ENCODE measurements at regions of chr12 and their contacts with region 1.

Region 1: DNA sequence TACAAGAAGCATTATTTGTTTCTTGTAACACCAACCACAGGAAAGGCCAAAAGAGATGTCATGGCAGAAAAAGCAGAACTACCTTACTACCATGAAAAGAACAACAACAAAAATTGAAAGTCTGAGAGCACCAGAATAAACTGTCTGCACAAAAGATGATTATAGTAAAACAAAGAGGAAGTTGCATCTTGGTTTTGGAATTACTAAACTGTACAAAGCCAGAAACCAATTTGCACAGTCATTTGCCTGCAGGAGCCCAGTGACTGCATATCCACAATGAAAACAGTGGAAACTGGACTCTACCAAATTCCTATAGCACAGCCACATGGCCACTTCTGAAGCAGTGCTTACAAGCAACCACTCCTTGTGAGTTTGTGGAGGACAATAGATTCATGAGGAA is 276.2 kb downstream of the SSPN start:
- DNase-seq: peak; percentile 69
- ATAC-seq: peak; percentile 70
- H3K4me3 ChIP-seq: peak overlapping the region in 1 of 5 experiments; percentile 8
- H3K4me3 Mint-ChIP-seq: peak overlapping the region; percentile 36
- H3K27ac ChIP-seq: peak overlapping the region; percentile 39 to 63
- H3K27ac Mint-ChIP-seq: peak overlapping the region; percentile 78
- H3K4me1 ChIP-seq: peaks cover 30 to 38% of the 10 kb centered on the region in 2 donors
- H3K4me1 Mint-ChIP-seq: peaks cover 47% of the 10 kb centered on the region
- H3K27me3 ChIP-seq: no peaks in the 10 kb centered on the region
- H3K27me3 Mint-ChIP-seq: no peaks in the 10 kb centered on the region
- CTCF ChIP-seq: no peak

Region 2: DNA sequence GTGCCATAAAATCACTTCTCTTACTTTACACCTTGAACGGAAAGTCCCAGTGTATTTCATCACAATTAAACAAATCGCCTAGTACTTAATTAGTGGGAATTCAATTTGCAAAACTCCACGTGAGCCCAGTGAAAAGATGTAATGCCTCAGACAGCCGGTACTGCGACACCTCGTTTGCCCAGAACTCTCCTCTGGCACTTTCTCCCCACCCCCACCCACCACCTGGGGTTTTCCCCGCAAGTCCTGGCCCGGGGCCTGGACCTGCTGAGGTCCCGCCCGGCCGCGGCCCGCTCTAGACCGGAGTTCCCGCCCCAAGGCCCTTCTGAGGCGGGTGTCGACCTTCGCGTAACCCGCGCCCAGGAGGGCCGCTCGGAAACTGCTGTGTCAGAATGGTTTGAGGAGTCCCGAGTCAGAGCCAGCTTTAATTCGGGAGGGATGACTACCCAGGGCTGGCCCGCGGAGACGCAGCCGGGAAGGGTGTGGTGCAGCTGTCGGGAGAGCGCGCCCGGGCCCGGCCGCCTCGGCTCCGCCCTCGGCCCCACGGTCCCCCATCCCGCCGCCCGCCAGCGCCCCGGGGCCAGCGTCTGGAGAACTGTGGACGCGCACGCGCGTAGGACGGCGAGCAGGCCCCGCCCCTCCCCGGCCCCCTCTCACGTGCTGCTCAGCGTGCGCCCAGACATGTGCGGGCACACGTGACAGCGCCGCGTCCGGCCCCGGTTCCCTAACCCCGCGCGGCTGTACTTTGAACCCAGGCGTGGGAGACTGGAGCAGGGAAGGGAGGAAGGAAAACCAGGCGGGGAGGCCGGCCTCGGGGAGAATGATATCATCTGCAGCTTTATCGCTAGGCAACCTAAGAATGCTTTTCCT is 357.5 kb before region 1 on chr12:
- CTCF ChIA-PET with region 1: interaction called, 6 read pairs
- POLR2A ChIA-PET with region 1: no interaction called
- intact Hi-C with region 1: loop called (anchors 2 kb)
- DNase-seq: peak; percentile 94
- ATAC-seq: peak; percentile 80
- H3K4me3 ChIP-seq: peak overlapping the region in 4 of 5 experiments; percentile 67 to 80 (median 70)
- H3K4me3 Mint-ChIP-seq: peak overlapping the region; percentile 87
- H3K27ac ChIP-seq: peak overlapping the region; percentile 91 to 95
- H3K27ac Mint-ChIP-seq: peak overlapping the region; percentile 75
- H3K4me1 ChIP-seq: peaks cover 36 to 47% of the 10 kb centered on the region in 2 donors
- H3K4me1 Mint-ChIP-seq: peaks cover 49% of the 10 kb centered on the region
- H3K27me3 ChIP-seq: no peaks in the 10 kb centered on the region
- H3K27me3 Mint-ChIP-seq: no peaks in the 10 kb centered on the region
- CTCF ChIP-seq: peak; percentile 48

Region 3: DNA sequence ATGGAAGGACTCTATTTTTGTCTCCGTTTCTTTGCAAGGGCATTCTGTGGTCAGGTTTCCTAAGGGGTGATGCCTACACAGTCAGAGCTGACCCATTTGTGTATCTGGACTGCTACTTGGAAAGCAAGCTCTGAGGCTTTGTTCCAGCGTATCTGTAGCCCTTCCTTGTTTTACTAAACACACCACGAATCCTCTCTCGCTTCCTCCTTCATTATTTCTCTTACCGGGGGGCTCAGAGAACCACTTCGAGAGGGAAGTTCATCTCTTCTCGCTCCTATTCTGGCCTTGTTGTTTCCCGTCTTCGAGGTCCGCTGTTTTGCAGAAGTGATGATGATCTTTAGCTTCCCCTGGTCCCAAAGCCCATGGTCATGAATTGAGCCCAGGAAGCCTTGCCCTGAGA is 111.5 kb before region 1 on chr12:
- CTCF ChIA-PET with region 1: no interaction called
- POLR2A ChIA-PET with region 1: no interaction called
- intact Hi-C with region 1: no loop called
- DNase-seq: no peak
- ATAC-seq: no peak
- H3K4me3 ChIP-seq: no peak overlapping the region
- H3K4me3 Mint-ChIP-seq: no peak overlapping the region
- H3K27ac ChIP-seq: no peak overlapping the region
- H3K27ac Mint-ChIP-seq: no peak overlapping the region
- H3K4me1 ChIP-seq: no peaks in the 10 kb centered on the region
- H3K4me1 Mint-ChIP-seq: no peaks in the 10 kb centered on the region
- H3K27me3 ChIP-seq: no peaks in the 10 kb centered on the region
- H3K27me3 Mint-ChIP-seq: no peaks in the 10 kb centered on the region
- CTCF ChIP-seq: no peak

Region 4: DNA sequence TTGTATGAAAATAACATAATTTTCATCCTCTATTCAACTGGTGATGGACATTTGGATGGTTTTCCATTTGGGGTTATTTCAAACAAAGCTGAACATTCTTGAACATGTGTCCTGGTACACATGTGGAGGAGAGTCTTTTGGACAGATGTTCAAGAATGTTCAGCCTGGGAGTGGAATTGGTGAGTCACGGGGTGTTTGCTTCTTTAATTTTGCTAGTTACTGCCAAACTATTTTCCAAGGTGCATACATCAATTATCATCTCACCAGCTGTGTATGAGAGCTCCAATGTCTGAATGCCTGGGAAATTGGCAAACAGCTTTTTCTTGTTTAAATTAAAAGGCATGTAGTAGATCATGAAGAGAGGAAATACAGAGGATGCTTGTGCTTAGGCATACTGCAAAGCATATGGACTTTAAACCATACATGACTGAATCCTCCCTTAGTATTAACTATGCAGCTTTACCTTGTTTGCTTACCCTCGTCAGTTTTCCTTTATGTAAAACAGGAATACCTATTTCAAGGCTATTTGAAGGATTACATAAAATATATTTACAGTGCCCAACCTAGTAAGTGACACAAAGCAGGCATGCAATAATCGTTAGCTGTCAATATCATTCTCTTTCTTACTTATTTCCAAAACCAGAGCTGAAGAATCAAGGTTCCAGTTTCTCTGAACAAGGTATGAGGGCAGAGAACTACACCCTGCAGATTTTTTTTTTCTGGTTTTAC is 209.3 kb after region 1 on chr12:
- CTCF ChIA-PET with region 1: no interaction called
- POLR2A ChIA-PET with region 1: no interaction called
- intact Hi-C with region 1: no loop called
- DNase-seq: no peak
- ATAC-seq: no peak
- H3K4me3 ChIP-seq: no peak overlapping the region
- H3K4me3 Mint-ChIP-seq: no peak overlapping the region
- H3K27ac ChIP-seq: no peak overlapping the region
- H3K27ac Mint-ChIP-seq: no peak overlapping the region
- H3K4me1 ChIP-seq: no peaks in the 10 kb centered on the region
- H3K4me1 Mint-ChIP-seq: no peaks in the 10 kb centered on the region
- H3K27me3 ChIP-seq: no peaks in the 10 kb centered on the region
- H3K27me3 Mint-ChIP-seq: no peaks in the 10 kb centered on the region
- CTCF ChIP-seq: no peak

Measured in B cell (primary cell).